Spleen (tissue), 13 donors: ENCODE measurements at regions of chr12 and their contacts with region 1.

Region 1: GRCh38 chr12:124036674-124037109 is 63.7 kb downstream of the ZNF664 start:
- DNase-seq: no peak
- H3K4me3 ChIP-seq: no peak overlapping the region
- H3K27ac ChIP-seq: no peak overlapping the region
- H3K4me1 ChIP-seq: peaks cover 0 to 22% (median 3%) of the 10 kb centered on the region in 6 donors
- H3K27me3 ChIP-seq: peaks cover 0 to 3% (median 0%) of the 10 kb centered on the region in 7 donors
- CTCF ChIP-seq: peak; percentile 79 to 92 (median 87)
- POLR2A ChIP-seq: no peak

Region 2: DNA sequence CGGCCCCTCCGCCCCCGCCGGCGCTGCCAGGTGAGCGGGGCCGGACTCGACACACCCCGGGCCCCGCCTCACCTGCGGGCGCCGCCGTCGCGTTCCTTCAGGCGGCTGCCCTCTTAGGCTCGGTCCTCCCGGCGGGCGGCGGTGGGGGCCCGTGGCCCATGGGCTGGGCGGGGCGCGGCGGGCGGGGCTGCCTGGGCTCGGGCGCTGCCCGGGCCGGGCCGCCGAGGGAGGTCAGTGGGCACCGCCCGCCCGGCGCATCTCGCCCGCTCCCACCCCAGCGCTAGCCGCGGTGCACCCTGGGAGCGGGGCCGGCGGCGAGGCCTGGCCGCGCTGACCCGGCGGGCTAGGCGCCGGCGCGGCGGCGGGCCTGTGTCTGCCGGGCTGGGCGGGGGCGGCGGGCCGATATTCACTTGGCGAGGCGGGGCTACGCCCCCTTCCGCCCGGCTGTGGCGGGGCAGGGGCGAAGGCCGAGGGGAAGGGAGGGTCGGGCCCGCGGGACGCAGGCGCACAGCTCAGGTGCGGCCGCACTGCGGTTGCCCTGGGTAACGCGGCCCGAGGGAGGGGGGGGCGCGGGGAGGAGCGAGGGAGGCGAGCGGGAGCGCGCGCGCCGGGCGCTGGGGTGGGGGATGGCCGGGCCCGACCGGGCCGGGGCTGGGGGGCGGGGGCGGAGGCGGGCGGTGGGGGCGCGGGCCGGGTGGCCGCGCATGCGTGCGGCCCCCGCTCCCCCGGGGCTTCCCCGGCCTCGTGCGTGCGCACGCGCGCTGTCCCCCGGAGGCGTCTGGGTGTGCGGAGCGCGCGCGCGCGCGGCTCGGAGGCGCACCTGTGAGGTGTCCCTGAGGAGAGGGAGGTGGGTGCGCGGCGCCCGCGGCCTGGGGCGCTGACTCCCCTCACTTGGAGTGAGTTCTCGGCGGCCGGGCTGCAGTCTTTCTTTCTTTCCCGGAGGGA is 64.0 kb before region 1 on chr12 and contains the starts of genes CCDC92 and ZNF664:
- intact Hi-C with region 1: no loop called
- DNase-seq: peak; percentile 99
- H3K4me3 ChIP-seq: peak within 1 kb of the TSS; percentile 84 to 99 (median 92)
- H3K27ac ChIP-seq: peak within 1 kb of the TSS; percentile 79 to 92 (median 86)
- H3K4me1 ChIP-seq: peaks cover 0 to 46% (median 27%) of the 10 kb centered on the region in 6 donors
- H3K27me3 ChIP-seq: peaks cover 0 to 5% (median 0%) of the 10 kb centered on the region in 7 donors
- CTCF ChIP-seq: peak in 2 of 11 experiments; percentile 29 to 43
- POLR2A ChIP-seq: peak in 1 of 3 donors; percentile 39
- total RNA-seq, gene CCDC92: 18.9 to 36.7 (median 28.7) TPM
- total RNA-seq, gene ZNF664: 36.7 to 53.4 (median 49.7) TPM

Region 3: GRCh38 chr12:124321040-124321481 is 284.4 kb after region 1 on chr12:
- intact Hi-C with region 1: loop called (anchors 5 kb)
- DNase-seq: peak; percentile 86
- H3K4me3 ChIP-seq: no peak overlapping the region
- H3K27ac ChIP-seq: no peak overlapping the region
- H3K4me1 ChIP-seq: no peaks in the 10 kb centered on the region
- H3K27me3 ChIP-seq: no peaks in the 10 kb centered on the region
- CTCF ChIP-seq: peak; percentile 71 to 93 (median 88)
- POLR2A ChIP-seq: no peak

Region 4: DNA sequence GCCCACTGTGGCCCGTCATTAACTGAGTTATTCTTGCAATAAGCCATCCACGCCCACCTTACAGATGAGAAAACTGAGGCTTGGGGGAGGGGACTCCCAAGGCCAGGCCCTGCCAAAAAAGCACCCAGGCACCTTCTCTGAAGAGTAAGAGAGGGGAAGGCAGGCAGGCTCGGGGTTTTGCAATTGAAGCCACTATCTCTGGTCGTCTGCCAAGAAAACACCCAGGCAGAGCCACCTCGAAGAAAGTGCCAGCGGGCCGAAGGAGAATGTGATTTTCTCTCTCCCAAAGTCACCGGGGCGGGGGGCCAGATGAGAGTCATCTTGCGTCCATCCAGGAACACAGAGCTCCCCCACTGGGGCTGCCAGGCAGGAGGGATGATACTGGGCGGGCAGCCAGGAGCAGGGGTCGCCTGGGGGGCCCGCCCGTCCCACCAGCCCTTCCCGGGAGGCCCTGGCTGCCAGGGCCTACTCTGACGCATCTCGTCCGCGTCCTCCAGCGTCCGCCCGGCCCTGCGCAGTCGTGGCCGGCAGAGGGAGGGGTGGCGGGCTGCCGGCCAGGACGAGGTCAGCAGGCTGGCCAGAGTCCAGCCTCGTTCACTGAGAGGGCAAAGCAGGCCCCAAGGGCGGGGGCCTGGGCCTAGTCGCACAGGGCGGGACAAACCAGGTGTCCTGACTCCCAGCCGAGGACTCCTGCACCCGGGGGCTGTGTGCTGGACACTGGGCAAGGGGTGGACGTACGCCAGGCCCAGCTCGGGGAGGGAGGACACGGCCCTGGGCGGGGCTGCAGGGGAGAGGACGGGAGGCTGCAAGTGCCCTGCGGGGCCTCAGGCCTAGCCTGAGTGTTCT is 332.6 kb after region 1 on chr12:
- intact Hi-C with region 1: no loop called
- DNase-seq: peak; percentile 88
- H3K4me3 ChIP-seq: no peak overlapping the region
- H3K27ac ChIP-seq: peak overlapping the region; percentile 63 to 87 (median 80)
- H3K4me1 ChIP-seq: peaks cover 11 to 51% (median 37%) of the 10 kb centered on the region in 6 donors
- H3K27me3 ChIP-seq: no peaks in the 10 kb centered on the region
- CTCF ChIP-seq: peak in 10 of 11 experiments; percentile 4 to 65 (median 52)
- POLR2A ChIP-seq: no peak

Region 5: GRCh38 chr12:124767066-124767821 is 730.6 kb after region 1 on chr12:
- intact Hi-C with region 1: loop called (anchors 2 kb)
- DNase-seq: peak; percentile 95
- H3K4me3 ChIP-seq: no peak overlapping the region
- H3K27ac ChIP-seq: peak overlapping the region in 3 of 8 donors; percentile 26 to 49 (median 41)
- H3K4me1 ChIP-seq: peaks cover 9 to 48% (median 29%) of the 10 kb centered on the region in 6 donors
- H3K27me3 ChIP-seq: peaks cover 0 to 18% (median 0%) of the 10 kb centered on the region in 7 donors
- CTCF ChIP-seq: peak; percentile 97 to 99 (median 99)
- POLR2A ChIP-seq: no peak

Region 6: GRCh38 chr12:124898200-124898922 is 861.7 kb after region 1 on chr12:
- intact Hi-C with region 1: loop called (anchors 5 kb)
- DNase-seq: peak; percentile 90
- H3K4me3 ChIP-seq: peak overlapping the region in 1 of 8 donors; percentile 35
- H3K27ac ChIP-seq: peak overlapping the region in 5 of 8 donors; percentile 19 to 63 (median 42)
- H3K4me1 ChIP-seq: peaks cover 4 to 35% (median 9%) of the 10 kb centered on the region in 6 donors
- H3K27me3 ChIP-seq: no peaks in the 10 kb centered on the region
- CTCF ChIP-seq: peak; percentile 49 to 76 (median 70)
- POLR2A ChIP-seq: no peak